ENCODE measurements at regions of chr1 and their contacts with region 1.

Region 1: GRCh38 chr1:62175568-62176179 is 19.0 kb upstream of the L1TD1 start:
- DNase-seq: peak; percentile 60
- H3K4me3 ChIP-seq: no peak overlapping the region
- H3K27ac ChIP-seq: no peak overlapping the region
- H3K4me1 ChIP-seq: no peaks in the 10 kb centered on the region
- H3K27me3 ChIP-seq: no peaks in the 10 kb centered on the region
- CTCF ChIP-seq: peak; percentile 72

Region 2: GRCh38 chr1:62057641-62058295 is 117.9 kb before region 1 on chr1:
- intact Hi-C with region 1: no loop called
- DNase-seq: no peak
- H3K4me3 ChIP-seq: no peak overlapping the region
- H3K27ac ChIP-seq: no peak overlapping the region
- H3K4me1 ChIP-seq: no peaks in the 10 kb centered on the region
- H3K27me3 ChIP-seq: no peaks in the 10 kb centered on the region
- CTCF ChIP-seq: no peak

Region 3: DNA sequence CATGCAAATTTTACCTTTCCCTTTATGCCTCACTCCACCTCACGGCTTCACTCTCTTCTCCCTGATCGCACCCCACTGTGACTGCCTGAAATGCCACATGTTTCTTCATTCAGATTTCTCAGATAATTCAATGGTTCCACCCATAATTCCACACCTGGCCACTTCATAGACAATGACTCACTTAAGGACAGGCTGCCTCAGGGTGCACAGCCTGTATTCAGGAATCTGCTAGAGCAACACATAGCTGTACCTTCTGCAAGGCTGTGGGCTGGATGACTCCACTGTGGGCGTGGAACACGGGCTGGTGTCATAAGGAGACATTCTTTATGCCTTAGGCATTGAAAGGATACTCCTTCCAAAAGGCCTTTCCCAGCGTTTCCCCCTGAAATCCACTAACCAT is 55.0 kb after region 1 on chr1:
- intact Hi-C with region 1: no loop called
- DNase-seq: no peak
- H3K4me3 ChIP-seq: no peak overlapping the region
- H3K27ac ChIP-seq: no peak overlapping the region
- H3K4me1 ChIP-seq: no peaks in the 10 kb centered on the region
- H3K27me3 ChIP-seq: no peaks in the 10 kb centered on the region
- CTCF ChIP-seq: no peak

Region 4: GRCh38 chr1:62407405-62408009 is 231.8 kb after region 1 on chr1:
- intact Hi-C with region 1: loop called (anchors 2 kb)
- DNase-seq: peak; percentile 31
- H3K4me3 ChIP-seq: no peak overlapping the region
- H3K27ac ChIP-seq: no peak overlapping the region
- H3K4me1 ChIP-seq: no peaks in the 10 kb centered on the region
- H3K27me3 ChIP-seq: no peaks in the 10 kb centered on the region
- CTCF ChIP-seq: peak; percentile 78

Measured in colonic mucosa (tissue), 4 donors.